Activated T-helper 1 cell treated with anti-CD3 and anti-CD28 coated beads, Interleukin-12 subunit alpha, Interleukin-12 subunit beta, Interleukin-2, Interleukin-4 antibody, amounts not matched to agents 30 ng/mL and 10 ng/mL and 1 ng/mL, durations not matched to agents 14 hours and 24 hours and 36 hours (primary cell): ENCODE measurements at regions of chr15 and their contacts with region 1.

Region 1: DNA sequence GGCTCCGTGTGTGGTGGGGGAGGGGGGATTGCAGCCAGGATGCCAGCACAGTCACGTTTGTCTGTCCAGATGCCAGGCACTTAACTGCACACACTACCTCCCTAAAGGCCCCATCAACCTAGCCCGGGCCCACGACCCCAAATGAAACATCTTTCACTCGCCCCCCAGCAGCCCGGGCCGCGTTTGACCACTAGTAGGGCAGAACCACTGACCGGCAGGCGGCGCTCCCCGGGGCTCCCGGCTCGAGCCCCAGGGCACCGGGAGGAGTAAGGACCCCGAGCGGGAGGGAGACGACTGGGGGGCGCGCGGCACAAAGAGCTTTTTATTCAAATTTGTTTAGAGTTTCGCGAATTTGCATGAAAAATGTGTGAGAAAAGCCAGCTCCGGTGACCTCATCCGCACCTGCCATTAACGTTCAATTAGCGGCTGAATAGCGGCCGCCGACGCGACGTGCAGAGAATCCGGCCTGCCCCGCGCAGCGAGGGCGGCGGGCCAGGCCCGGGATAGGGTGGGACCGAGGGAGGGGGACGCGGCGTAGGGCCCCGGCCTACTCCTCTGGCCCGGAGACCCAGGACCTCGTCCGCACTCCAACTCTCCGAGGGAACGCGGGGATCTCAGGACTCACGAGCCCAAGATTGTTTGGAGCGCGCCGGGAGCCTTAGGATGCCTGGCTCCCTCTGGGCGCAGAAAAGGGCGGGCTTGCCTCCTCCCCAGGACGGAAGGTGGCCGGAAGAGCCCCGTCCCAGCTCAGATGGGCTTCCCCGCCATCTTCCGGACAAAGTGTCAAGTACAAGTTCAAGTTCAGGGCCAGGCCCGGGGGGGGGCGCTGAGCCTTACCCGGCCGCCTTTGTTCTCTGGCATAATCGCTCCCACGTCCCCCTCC is 64.9 kb upstream of the POLG start:
- DNase-seq: peak; percentile 28
- H3K4me3 Mint-ChIP-seq: peak overlapping the region; percentile 72
- H3K27ac Mint-ChIP-seq: peak overlapping the region; percentile 68
- H3K4me1 Mint-ChIP-seq: peaks cover 16% of the 10 kb centered on the region
- H3K27me3 Mint-ChIP-seq: peaks cover 48% of the 10 kb centered on the region

Region 2: DNA sequence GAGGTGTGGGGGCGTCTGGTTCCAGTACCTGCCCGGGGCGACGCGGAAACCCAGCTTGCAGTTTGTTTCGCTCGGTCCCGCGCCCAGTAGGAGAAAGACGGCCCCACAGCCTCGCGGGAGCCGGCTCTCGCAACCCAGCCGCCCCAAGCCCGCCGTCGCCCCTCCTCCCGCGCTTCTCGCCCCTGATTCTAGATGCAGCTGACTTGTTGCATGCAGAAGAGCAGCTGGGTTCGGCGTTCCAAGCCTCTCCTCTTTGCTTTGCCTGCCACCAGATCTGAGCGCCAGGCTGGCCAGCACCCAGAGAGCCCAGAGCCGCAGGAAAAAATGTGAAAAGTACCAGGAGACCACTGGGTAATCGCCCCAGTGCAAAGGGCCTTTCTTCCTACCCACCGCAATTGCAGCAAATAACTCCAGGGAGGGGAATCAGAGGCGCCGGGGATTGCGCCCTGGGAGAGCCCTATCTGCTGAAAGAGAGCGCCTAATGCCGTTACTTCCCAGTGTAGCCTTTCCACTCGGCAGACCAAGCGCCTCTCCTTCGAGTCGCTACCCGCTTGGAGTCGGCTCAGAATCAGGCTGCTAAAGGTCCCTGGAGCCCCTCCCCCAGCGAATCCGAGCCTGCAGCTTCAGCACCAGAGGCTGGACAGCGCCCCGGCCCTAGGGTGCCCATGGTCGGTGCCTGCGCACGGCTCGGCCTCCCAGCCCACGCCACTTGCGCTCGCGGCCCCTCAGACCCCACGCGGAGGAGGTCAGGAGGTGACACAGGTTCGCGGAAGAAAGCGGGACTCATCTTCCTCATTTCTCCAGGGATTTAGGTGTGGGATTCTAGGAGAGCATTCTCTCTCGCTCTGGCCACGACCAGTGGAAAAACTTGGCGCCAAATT is 794.0 kb before region 1 on chr15:
- intact Hi-C with region 1: loop called (anchors 10 kb)
- DNase-seq: no peak
- H3K4me3 Mint-ChIP-seq: no peak overlapping the region
- H3K27ac Mint-ChIP-seq: no peak overlapping the region
- H3K4me1 Mint-ChIP-seq: peaks cover 5% of the 10 kb centered on the region
- H3K27me3 Mint-ChIP-seq: peaks cover 67% of the 10 kb centered on the region

Region 3: GRCh38 chr15:89556413-89557262 is 157.2 kb after region 1 on chr15:
- intact Hi-C with region 1: no loop called
- DNase-seq: peak; percentile 21
- H3K4me3 Mint-ChIP-seq: no peak overlapping the region
- H3K27ac Mint-ChIP-seq: no peak overlapping the region
- H3K4me1 Mint-ChIP-seq: no peaks in the 10 kb centered on the region
- H3K27me3 Mint-ChIP-seq: peaks cover 21% of the 10 kb centered on the region